GM10248 (cell line): ENCODE measurements at regions of chr19 and their contacts with region 1.

Region 1: DNA sequence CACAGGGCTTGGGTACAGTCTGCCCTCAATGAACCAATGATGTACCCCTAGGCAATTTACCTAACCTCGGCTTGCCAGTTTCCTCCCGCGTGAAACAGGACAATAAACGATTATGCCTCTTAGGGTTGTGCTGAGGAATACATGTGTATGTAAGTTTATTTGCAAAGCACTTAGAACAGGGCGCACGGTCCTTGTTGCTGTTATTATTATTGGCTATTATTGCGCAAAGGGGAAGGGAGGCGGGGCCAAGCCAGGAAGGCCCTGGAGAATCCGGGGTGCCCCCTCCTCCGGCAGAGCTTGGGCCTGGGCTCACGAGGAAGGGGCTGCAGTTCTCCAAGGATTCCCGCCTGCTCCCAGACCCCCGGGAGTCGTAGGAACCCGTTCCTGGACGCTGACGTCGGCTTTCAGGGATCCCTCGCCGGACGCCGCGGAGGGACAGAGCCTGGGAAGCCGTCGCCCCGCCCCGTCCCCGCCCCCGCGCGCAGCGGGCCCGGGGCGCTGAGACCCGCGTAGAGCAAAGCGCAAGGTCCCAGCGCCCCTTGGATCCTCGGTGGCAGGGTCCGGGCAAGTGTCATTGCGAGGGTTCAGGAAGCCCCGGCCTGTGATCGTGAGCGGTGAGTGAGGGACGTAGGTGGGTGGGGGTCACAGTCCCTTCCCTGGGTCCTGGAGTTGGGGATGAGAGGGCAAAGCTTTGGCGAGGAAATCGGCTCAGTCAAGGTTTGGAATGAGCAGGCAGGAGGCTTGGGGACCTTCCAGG is at the start of gene TMEM91:
- DNase-seq: no peak
- CTCF ChIP-seq: no peak

Region 2: GRCh38 chr19:41363753-41364523 is 12.5 kb before region 1 on chr19 and contains the start of gene B9D2:
- CTCF ChIA-PET with region 1: interaction called, 18 read pairs
- POLR2A ChIA-PET with region 1: no interaction called
- DNase-seq: peak; percentile 97
- CTCF ChIP-seq: no peak

Region 3: DNA sequence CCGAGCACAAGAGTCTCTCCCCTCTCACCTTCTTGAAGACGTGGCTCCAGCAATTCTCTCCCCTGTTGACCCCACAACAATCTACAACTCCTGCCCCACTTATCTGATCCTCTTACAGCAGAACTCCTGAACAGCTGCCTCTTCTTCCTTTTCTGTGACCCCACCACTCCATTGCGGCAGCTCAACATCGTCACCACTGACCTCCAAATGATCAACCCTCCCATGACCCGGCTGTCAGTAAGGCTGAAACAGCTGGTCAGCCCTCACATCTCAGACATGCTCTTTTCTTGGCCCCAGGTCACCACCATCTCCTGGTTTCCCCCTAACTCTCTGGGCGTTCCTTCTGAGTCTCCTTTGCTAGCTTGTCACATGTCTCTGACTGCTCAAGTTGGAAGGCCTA is 18.9 kb after region 1 on chr19:
- CTCF ChIA-PET with region 1: interaction called, 12 read pairs
- POLR2A ChIA-PET with region 1: no interaction called
- DNase-seq: no peak
- CTCF ChIP-seq: no peak